Activated CD4-positive, alpha-beta memory T cell treated with anti-CD3 and anti-CD28 coated beads for 36 hours (primary cell): ENCODE measurements at regions of chr7 and their contacts with region 1.

Region 1: DNA sequence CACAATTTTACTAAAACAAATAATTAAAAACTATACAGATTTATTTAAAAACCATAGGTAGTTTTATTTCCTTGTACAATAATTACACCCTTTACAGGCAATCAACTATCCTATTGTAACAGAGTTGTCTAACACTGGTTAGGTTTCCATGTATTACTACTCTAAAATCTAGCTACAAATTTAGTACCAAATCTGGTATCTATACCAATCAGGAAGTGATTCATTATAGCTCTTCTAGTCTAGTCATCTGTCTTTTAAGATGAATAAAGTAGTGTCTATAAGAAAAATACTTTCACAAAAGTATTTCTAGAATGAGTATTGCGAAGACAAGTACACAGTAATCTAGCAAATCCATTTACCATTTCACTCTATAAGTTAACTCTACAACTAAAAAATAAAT is 16.9 kb downstream of the ZNF800 start:
- DNase-seq: no peak
- H3K4me3 Mint-ChIP-seq: no peak overlapping the region
- H3K27ac Mint-ChIP-seq: no peak overlapping the region
- H3K4me1 Mint-ChIP-seq: peaks cover 56% of the 10 kb centered on the region
- H3K27me3 Mint-ChIP-seq: no peaks in the 10 kb centered on the region

Region 2: DNA sequence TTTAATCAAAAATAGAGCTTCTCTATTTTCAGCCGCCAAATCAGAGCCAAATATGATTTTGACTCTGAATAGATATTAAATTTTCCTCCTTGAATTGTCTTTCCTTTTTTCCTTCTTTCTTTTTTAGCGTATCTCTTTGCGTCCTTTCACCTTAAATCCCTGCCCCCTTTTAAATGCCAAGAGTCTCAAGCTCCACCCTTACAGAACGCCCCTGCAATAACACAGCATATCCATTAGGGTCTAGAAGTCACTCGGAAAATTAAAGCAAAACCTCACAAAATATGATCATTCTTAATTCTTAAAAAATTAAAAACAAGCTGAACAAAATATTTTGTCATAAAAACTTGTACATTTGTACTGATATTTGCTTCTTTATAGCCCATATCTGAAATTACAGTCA is 71.5 kb before region 1 on chr7:
- CTCF ChIA-PET with region 1: no interaction called
- POLR2A ChIA-PET with region 1: no interaction called
- intact Hi-C with region 1: no loop called
- DNase-seq: no peak
- H3K4me3 Mint-ChIP-seq: no peak overlapping the region
- H3K27ac Mint-ChIP-seq: no peak overlapping the region
- H3K4me1 Mint-ChIP-seq: no peaks in the 10 kb centered on the region
- H3K27me3 Mint-ChIP-seq: peaks cover 3% of the 10 kb centered on the region

Region 3: DNA sequence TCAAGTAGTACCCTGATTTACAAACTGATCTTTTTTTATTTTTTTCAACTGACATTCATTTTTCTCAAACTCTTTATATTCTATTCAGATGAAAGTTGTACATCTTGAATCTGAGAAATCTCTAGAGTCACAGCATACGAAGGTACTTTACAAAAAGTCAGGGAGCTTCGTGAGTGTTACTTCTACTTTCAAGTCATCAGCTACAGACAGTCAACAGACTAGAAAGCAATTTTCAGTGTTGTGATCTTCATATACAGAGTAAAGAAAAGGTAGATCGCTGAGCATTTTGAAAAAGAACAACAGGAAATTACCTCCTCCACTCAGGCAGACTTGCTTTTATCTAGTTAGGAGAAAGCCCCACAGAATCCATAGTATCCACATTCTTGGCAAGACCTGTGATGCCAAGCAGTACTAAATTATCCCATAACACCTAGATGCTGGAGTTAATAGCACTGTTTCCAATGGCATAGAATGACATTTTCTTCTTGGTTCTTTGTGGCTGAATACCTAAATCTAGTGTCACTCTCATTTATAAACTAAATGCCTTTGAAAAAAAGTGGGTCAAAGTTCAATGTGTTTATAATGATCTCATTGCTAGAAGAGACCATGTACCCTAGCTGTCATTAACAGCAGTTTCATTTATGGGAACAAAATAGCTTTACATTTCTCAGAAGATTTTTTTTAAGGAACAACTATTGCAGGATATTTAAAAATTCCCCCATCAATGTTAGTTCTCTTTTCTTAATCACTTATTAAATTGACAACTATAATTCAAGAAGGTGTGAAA is 28.8 kb after region 1 on chr7:
- CTCF ChIA-PET with region 1: no interaction called
- POLR2A ChIA-PET with region 1: no interaction called
- intact Hi-C with region 1: loop called (anchors 2 kb)
- DNase-seq: no peak
- H3K4me3 Mint-ChIP-seq: no peak overlapping the region
- H3K27ac Mint-ChIP-seq: peak overlapping the region; percentile 49
- H3K4me1 Mint-ChIP-seq: peaks cover 17% of the 10 kb centered on the region
- H3K27me3 Mint-ChIP-seq: no peaks in the 10 kb centered on the region

Region 4: GRCh38 chr7:127413962-127414361 is 38.3 kb after region 1 on chr7:
- CTCF ChIA-PET with region 1: no interaction called
- POLR2A ChIA-PET with region 1: no interaction called
- intact Hi-C with region 1: loop called (anchors 1 kb)
- DNase-seq: no peak
- H3K4me3 Mint-ChIP-seq: no peak overlapping the region
- H3K27ac Mint-ChIP-seq: no peak overlapping the region
- H3K4me1 Mint-ChIP-seq: peaks cover 35% of the 10 kb centered on the region
- H3K27me3 Mint-ChIP-seq: no peaks in the 10 kb centered on the region

Region 5: DNA sequence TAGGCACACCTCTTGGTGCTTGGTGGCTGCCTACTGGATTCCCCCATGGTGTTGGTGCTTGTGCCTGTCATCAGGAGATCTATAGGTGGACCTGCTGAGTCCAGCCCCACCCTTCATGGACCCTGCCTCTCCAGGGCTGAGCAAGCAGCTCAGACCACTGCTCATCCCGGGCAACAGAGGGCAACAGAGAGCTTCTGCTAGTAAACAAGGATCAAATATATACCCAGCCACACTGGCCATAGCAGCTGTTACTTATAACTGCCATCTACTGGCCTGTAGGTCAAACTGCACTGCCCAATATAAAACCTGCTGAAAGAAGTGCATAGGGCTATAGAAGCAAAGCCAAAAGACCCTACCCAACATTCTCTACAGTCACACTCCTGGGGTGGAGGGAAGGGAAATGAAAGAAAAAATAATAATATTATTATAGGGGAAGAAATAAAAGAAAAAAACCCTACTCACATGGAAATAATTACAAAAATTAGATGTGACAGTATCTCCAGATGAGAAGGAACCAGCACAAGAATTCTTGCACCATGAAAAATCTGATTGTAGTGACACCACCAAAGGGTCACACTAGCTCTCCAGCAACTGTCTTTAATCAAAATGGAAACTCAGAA is 71.8 kb after region 1 on chr7:
- CTCF ChIA-PET with region 1: no interaction called
- POLR2A ChIA-PET with region 1: no interaction called
- intact Hi-C with region 1: no loop called
- DNase-seq: peak; percentile 52
- H3K4me3 Mint-ChIP-seq: no peak overlapping the region
- H3K27ac Mint-ChIP-seq: no peak overlapping the region
- H3K4me1 Mint-ChIP-seq: peaks cover 11% of the 10 kb centered on the region
- H3K27me3 Mint-ChIP-seq: peaks cover 7% of the 10 kb centered on the region